Left ventricle myocardium superior (tissue), 1 donor: ENCODE measurements at regions of chr12 and their contacts with region 1.

Region 1: DNA sequence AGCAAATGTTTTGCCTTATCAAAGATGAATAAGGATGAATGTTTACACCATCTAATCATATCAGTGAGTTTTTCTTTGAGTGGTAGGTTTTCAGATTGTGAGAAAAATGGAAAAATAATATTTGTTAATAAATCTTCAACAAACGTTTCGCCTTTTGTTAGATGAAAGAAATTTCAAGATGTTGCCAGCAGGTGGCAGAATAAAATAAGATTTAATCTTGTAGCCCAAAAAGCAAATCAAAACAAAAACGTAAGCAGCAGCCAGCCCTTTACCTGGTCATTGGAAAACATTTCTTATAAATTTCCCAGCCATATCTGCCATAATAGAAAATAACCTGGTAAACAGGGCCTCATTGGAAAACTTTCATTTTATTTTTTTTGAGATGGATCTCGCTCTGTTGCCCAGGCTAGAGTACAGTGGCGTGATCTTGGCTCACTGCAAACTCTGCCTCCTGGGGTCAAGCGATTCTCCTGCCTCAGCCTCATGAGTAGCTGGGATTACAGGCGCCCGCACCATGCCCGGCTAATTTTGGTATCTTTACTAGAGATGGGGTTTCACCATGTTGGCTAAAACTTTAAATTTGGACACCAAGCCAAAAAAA is 15.4 kb upstream of the TMEM120B start:
- DNase-seq: no peak
- ATAC-seq: no peak

Region 2: DNA sequence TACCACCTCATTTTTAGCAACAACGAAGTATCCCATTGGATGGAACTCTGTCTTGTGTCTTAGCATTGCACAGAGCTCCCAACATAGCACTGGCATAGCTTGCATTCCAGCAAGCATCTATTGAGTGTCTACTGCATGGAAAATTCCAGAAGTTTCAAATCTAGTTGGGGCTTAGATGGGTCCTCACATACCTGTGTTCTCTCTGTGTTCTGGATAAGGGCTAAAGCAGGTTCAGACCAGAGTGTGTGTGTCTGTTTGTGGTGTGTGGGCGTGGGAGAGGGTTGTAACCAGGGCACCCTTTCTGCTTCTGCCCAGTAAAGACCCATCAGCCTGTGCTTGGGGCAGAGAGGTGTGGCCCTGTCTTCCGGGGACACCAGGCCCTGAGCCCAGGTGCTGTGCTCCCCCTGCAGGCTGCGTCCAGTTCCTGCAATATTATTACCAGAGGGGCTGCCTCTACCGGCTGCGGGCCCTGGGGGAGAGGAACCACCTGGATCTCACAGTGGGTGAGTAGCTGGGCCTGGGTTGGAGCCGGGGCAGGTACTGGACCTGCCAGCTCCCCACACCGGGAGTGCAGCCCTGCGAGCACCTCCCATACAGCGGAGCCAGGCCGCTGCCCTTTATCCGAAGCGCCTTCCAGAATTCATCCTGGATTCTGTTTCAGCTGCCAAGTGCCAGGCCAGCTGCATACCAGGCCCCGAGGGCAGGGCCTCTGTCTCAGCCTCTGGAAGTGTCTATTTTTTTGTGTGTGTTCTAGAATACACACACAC is 76.0 kb after region 1 on chr12:
- intact Hi-C with region 1: loop called (anchors 5 kb)
- DNase-seq: peak; percentile 79
- ATAC-seq: peak; percentile 66